Activated T-helper 1 cell treated with anti-CD3 and anti-CD28 coated beads, Interleukin-12 subunit alpha, Interleukin-12 subunit beta, Interleukin-2, Interleukin-4 antibody, amounts not matched to agents 30 ng/mL and 10 ng/mL and 1 ng/mL, durations not matched to agents 14 hours and 24 hours and 36 hours (primary cell): ENCODE measurements at regions of chr6 and their contacts with region 1.

Region 1: DNA sequence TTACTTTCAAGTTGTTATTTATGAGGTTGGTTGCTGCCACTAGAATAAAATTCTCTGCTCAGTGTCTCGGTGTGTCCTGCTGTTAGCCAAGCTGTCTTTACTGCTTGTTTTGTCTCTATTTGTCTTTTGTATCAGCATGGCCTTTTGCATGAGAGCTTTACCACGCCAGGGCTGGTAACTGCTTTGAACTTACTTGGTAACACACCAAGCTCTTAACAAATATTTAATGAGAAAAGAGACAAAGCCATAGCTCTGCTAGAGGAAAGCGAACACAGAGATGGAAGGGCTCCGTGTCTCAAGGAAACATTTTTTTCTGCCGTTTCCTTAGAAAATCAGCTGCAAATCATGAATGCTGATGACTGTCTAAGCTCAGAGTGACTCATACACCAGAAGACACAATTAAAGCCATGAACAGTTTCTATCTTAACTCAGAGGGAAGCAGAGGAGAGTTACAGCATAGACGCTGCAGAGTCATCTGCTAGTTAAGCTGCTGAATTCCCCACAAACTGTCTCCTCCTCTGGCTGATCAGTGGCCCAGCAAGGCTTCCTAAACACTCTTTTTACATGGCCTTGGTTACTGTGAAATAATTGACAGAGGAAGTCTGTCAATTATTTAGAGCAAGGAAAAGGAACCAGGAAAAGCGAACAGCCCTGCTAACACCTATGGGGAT is 44.8 kb downstream of the AGPAT4 start:
- DNase-seq: no peak
- H3K4me3 Mint-ChIP-seq: peak overlapping the region; percentile 75
- H3K27ac Mint-ChIP-seq: peak overlapping the region; percentile 93
- H3K4me1 Mint-ChIP-seq: peaks cover 61% of the 10 kb centered on the region
- H3K27me3 Mint-ChIP-seq: no peaks in the 10 kb centered on the region

Region 2: GRCh38 chr6:160462551-160463109 is 766.4 kb before region 1 on chr6:
- intact Hi-C with region 1: loop called (anchors 2 kb)
- DNase-seq: peak; percentile 76
- H3K4me3 Mint-ChIP-seq: peak overlapping the region; percentile 34
- H3K27ac Mint-ChIP-seq: peak overlapping the region; percentile 71
- H3K4me1 Mint-ChIP-seq: peaks cover 79% of the 10 kb centered on the region
- H3K27me3 Mint-ChIP-seq: peaks cover 14% of the 10 kb centered on the region

Region 3: DNA sequence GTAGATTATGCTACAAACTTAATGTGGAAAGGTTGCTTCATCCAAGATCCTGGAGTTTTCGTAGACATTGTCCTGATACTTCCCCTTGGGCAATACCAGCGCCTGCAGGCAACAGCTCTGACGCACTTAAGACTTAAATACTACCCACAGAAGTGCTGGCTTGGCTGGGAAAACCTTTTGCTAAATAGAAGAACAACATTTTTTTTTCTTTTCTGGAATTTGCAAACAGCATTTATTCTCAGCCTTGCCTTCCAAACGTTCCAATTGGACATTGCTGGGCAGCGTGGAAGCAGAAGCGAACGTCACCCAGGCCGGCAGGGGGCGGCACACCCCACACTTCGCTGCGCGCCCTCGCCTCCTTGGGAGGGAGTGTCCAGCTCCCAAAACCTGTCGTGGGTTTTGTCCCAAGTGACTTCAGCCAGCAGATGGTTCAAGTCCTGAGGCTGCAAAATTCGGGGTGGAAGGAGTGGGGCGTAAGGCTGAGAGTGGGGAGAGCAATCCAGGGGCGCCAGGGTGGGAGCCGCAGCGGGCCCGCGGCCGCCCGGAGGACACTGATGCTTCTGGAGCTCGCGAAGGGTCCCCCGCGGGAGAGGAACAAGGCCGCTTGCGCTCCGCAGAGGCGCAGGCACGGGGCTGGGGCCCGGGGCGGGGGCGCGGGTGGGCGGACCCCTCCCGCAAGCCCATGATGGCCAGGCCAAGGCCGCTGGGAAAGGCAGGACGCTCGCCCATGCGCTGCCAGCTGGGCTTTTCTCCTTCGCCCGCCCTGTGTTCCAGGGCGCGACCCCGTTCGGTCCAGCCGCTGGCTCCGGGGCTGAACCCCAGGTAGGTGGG is 298.3 kb before region 1 on chr6:
- intact Hi-C with region 1: loop called (anchors 5 kb)
- DNase-seq: peak; percentile 31
- H3K4me3 Mint-ChIP-seq: no peak overlapping the region
- H3K27ac Mint-ChIP-seq: no peak overlapping the region
- H3K4me1 Mint-ChIP-seq: no peaks in the 10 kb centered on the region
- H3K27me3 Mint-ChIP-seq: peaks cover 18% of the 10 kb centered on the region

Region 4: DNA sequence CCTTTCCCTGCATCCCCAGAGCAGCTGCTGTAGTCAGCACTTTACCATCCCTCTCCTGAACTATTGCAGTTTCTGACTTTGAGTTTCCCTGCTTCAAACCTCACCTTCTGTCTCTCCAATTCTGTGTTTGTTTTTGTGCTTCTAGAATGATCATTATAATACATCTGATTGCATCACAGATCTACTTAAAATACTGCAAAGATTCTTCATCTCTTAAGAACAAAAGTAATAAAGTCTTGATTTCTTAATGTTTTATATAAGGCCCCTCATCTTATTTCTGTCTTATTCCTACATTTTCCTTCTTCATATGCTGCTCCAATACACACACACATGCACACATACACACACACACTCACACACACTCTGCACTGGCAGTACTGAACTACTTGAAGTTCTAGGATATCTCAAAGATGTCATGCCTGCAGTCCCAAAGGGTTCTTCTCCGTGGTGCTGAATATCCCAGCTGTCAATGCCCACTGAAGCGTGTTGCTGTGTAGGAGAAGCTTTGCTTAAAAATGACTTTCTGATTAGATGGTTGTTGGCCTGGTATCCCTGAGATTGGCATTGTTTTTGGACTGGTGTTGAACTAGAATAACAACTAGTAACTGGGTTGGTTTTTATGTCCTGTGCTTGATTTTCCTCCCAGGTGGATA is 140.3 kb before region 1 on chr6:
- intact Hi-C with region 1: loop called (anchors 5 kb)
- DNase-seq: no peak
- H3K4me3 Mint-ChIP-seq: no peak overlapping the region
- H3K27ac Mint-ChIP-seq: peak overlapping the region; percentile 69
- H3K4me1 Mint-ChIP-seq: peaks cover 12% of the 10 kb centered on the region
- H3K27me3 Mint-ChIP-seq: no peaks in the 10 kb centered on the region

Region 5: GRCh38 chr6:161128680-161129196 is 100.3 kb before region 1 on chr6:
- intact Hi-C with region 1: loop called (anchors 2 kb)
- DNase-seq: peak; percentile 10
- H3K4me3 Mint-ChIP-seq: no peak overlapping the region
- H3K27ac Mint-ChIP-seq: peak overlapping the region; percentile 79
- H3K4me1 Mint-ChIP-seq: peaks cover 27% of the 10 kb centered on the region
- H3K27me3 Mint-ChIP-seq: no peaks in the 10 kb centered on the region

Region 6: DNA sequence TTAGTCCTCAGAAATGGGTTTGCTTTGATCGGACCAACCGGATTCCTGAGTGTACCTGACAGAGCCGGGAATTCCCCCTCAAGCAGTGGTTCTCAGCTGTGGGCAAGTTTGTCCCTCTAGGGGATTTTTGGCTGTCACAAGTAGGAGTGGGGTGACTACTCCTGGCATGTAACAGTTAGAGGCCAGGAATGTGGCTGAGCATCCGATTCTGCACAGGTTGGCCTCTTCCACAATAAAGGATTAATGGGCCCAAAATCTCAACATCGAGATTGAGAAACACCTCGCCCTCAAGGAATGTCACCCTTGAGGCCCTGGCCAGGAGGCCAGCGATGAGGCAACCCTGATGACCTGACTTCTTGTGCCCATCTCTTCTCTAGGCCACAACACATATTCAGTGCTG is 36.9 kb after region 1 on chr6:
- intact Hi-C with region 1: no loop called
- DNase-seq: no peak
- H3K4me3 Mint-ChIP-seq: no peak overlapping the region
- H3K27ac Mint-ChIP-seq: no peak overlapping the region
- H3K4me1 Mint-ChIP-seq: peaks cover 27% of the 10 kb centered on the region
- H3K27me3 Mint-ChIP-seq: no peaks in the 10 kb centered on the region

Region 7: DNA sequence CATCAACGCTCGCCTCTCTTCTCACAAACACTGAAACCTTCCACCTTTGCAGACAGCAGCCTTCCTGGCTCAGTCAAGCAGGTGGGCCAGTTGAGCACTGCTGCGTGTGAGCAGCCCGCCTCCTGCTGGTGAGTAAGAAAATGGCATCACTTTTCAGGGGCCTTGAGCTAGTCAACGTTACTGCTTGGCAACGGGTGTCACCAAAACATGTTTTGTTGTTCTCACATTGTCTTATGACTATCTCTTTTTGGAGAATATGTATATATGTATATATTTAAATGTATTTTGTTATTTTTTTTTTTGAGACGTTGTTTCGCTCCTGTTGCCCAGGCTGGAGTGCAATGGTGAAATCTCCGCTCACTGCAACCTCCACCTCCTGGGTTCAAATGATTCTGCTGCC is 141.8 kb after region 1 on chr6:
- intact Hi-C with region 1: loop called (anchors 5 kb)
- DNase-seq: peak; percentile 54
- H3K4me3 Mint-ChIP-seq: no peak overlapping the region
- H3K27ac Mint-ChIP-seq: no peak overlapping the region
- H3K4me1 Mint-ChIP-seq: no peaks in the 10 kb centered on the region
- H3K27me3 Mint-ChIP-seq: no peaks in the 10 kb centered on the region

Region 8: GRCh38 chr6:161393839-161394364 is 164.8 kb after region 1 on chr6:
- intact Hi-C with region 1: loop called (anchors 2 kb)
- DNase-seq: peak; percentile 57
- H3K4me3 Mint-ChIP-seq: no peak overlapping the region
- H3K27ac Mint-ChIP-seq: no peak overlapping the region
- H3K4me1 Mint-ChIP-seq: no peaks in the 10 kb centered on the region
- H3K27me3 Mint-ChIP-seq: peaks cover 29% of the 10 kb centered on the region